Left cardiac atrium (tissue), 4 donors: ENCODE measurements at regions of chr21 and their contacts with region 1.

Region 1: GRCh38 chr21:25881525-25882376 is 147.0 kb downstream of the GABPA start:
- DNase-seq: peak; percentile 73
- ATAC-seq: peak; percentile 76 to 77

Region 2: DNA sequence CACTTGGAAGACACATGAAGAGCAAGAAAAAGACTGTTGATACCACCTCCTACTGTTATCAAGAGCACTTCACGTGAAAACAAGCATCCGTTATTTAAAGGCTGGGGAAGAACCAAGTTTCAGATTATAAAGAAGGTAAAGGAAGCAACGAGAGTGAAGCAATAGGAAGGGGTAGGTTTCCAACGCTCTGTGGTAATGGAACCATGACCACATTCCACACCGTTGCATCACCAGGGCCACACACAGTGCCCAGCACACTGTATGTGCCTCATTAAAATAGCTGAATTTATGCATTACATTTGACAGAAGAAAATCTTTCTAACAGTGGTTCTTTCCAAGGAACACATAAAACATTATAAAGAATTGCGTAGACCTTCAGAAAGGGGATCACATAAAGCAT is 710.3 kb before region 1 on chr21:
- intact Hi-C with region 1: no loop called
- DNase-seq: no peak
- ATAC-seq: no peak

Region 3: GRCh38 chr21:25688275-25689155 is 193.2 kb before region 1 on chr21:
- intact Hi-C with region 1: no loop called
- DNase-seq: no peak
- ATAC-seq: peak in 1 of 2 donors; percentile 39

Region 4: DNA sequence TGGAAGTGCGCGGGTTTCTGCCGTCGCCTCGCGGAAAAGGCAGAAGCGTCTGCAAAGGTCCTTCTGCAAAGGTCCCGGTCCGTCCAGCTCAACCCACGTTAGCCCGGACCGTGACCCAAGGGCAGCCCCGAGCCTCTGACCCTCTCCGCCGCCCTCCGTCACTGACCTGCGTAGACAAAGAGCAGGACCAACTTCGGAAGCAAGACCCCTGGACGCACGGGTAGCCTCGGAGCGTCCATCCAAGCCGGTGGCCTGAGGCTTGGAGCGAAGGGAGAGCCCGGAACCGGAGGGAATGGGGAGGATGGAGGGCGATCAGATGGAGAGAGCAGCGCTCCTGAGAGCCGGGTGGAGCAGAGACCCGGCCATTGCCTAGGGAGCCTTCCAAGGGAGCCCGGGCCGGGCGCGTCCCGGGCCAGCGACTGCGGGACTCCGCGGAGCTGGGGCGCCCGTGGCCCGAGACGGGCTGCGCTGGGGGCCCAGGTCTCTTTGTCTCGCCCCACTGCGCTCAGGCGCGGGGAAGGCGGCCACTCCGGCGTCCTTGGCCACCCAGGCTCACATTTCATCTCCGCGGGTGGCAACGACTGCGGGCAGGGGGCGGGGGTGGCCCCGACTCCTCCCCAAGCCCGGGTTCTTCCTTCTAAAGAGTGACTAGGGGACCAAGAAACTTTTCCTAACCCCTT is 691.1 kb after region 1 on chr21 and contains the start of gene CYYR1:
- intact Hi-C with region 1: loop called in 1 of 2 experiments (anchors 10 kb)
- DNase-seq: peak; percentile 29
- ATAC-seq: peak; percentile 53 to 67
- total RNA-seq, gene CYYR1: 19.9 to 27.8 TPM

Region 5: GRCh38 chr21:26715878-26716506 is 834.2 kb after region 1 on chr21:
- intact Hi-C with region 1: loop called in 1 of 2 experiments (anchors 2 kb)
- DNase-seq: peak; percentile 33
- ATAC-seq: peak; percentile 51 to 76